Posterior vena cava (tissue), 2 donors: ENCODE measurements at regions of chr11 and their contacts with region 1.

Region 1: GRCh38 chr11:76598426-76598839 is 72.1 kb downstream of the LRRC32 start:
- DNase-seq: no peak

Region 2: GRCh38 chr11:76674517-76675400 is 76.3 kb after region 1 on chr11:
- intact Hi-C with region 1: loop called in 1 of 2 experiments (anchors 5 kb)
- DNase-seq: peak; percentile 74

Region 3: DNA sequence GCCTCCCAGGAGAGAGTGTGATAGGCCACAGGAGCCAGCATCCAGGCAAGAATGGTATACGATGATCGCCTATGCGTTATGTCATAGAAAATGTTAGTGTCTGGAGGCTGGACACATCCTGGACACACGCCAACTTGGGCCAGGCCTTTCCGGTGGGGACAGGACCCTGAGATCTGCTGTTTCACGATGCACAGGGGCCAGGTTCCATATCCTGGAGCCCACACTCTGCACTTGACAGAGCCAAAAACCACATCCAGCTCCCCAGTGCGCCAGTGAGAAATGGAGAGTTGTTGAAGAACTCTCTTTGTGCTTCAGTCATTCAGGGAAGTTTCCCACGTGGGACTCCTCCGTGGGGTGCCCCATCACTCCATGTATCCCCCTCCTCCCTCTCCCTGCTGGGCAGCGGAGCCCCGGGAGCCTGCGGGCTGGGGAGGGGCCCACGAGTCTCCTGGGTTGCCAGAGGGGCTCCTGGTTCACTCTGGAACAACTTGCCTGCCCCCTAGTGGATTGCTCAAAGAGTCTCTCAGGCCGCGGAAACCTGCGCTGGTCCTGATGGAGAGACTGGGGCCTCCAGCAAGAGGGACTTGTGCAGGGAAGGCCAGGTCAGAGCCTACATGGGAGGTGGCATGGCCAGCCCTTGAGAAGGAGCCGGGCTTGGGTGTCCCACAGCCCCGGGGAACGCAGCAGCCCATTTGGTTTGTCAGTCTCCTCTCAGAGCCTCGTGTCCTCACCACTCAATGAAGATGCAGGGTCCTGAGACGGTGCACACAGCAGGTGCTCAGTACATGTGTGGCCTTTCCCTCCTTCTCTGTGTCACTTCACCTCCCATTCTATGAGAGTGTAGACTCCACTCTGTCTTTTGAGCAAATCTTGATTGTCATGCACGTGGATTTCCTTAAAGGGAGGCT is 82.3 kb after region 1 on chr11:
- intact Hi-C with region 1: loop called (anchors 5 kb)
- DNase-seq: peak; percentile 89